ENCODE measurements at regions of chr14 and their contacts with region 1.

Region 1: DNA sequence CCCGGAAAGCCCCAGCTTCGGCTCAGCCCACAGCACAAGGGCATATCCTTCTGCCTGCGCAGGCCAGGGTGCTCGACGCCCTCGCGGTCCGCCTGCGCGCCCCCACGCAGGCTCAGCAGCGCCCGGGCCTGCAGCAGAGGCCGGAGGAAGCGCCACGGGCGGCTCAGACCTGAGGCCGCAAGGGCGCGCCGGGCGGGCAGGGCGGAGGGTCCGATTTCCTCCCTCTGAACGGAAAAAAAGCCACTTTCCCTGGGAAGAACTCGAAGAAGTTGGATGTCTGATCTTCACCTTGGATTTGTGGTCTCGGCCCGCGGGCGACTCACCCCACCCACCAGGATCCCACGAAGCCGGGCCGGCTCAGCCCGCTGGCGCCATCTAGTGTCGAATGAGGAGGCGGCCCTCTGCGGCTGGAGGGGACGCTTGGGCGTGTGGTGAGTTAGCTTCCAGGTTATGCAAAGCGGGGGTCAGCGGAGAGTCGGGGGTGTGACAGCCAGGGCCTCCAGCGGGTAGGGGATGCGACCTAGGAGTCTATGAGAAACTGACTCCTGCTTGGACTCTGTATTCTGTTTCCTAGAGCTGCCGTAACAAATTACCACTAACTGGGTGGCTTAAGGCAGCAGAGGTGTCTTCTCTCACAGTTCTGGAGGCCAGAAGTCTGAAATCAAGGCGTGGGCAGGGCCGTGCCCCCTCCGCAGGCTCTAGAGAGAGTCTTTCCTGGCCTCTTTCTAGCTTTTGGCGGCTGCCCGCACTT is 40.0 kb upstream of the SRSF5 start:
- DNase-seq: peak; percentile 86
- ATAC-seq: peak; percentile 94
- H3K4me3 Mint-ChIP-seq: peak overlapping the region; percentile 65
- H3K27ac Mint-ChIP-seq: peak overlapping the region; percentile 76
- H3K4me1 Mint-ChIP-seq: peaks cover 40% of the 10 kb centered on the region
- H3K27me3 Mint-ChIP-seq: no peaks in the 10 kb centered on the region

Region 2: DNA sequence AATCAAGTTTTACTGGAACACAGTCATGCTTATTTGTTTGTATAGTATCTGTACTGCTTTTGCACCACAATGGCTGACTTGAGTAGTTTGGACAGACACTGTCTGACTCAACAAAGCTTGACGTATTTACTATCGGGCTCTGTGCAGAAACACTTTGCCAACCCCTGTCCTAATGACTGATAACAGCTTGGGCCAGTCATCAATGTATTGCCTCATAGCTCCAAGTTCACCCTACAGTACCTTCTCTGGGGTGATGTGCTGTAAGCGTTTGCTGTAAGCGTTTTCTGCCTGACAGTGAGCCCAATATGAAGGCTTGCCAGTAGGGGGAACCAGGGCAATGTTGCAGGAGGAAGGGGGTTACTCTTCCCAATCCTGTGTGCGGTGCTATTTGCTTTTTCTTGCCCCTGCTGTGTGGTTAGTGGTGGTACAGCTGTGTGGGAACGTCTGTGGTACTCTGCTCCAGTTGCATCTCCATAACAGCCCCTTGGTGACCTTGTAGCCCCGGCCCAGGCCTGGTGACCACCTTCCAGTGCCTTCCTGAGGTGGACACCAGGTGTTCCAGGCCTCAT is 146.8 kb before region 1 on chr14:
- CTCF ChIA-PET with region 1: interaction called, 64 read pairs
- DNase-seq: peak; percentile 56
- ATAC-seq: peak; percentile 66
- H3K4me3 Mint-ChIP-seq: no peak overlapping the region
- H3K27ac Mint-ChIP-seq: no peak overlapping the region
- H3K4me1 Mint-ChIP-seq: peaks cover 6% of the 10 kb centered on the region
- H3K27me3 Mint-ChIP-seq: peaks cover 41% of the 10 kb centered on the region

Region 3: DNA sequence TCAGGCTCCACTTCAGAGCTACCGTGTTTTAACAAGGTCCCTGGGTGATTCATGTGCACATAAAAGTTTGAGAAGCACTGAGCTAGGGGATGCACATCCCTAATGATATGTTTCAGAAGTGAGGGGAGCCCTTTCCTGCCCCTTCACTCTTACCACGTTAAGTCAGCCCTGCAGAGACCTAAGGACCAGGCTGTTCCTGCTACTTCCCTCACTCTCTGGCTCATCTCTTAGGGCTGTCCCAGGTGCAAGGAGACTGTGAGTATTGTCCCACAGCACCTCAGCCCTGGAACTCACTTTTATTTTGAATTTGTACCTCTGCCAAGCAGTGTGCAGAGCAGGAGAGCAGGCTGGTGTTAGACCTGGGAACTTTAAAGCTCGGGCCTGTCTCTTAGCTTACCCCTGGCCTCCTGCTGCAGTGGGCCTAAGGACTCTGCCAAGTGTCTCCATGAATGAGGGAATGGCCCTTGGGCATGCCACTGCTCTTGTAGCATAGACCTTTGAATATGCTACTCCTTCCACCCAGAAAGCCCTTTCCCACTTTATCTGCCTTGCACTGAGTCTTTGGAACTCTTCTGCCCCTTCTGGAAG is 126.5 kb before region 1 on chr14:
- CTCF ChIA-PET with region 1: interaction called, 30 read pairs
- DNase-seq: no peak
- ATAC-seq: no peak
- H3K4me3 Mint-ChIP-seq: no peak overlapping the region
- H3K27ac Mint-ChIP-seq: no peak overlapping the region
- H3K4me1 Mint-ChIP-seq: peaks cover 4% of the 10 kb centered on the region
- H3K27me3 Mint-ChIP-seq: no peaks in the 10 kb centered on the region

Region 4: GRCh38 chr14:69640931-69641330 is 86.0 kb before region 1 on chr14:
- CTCF ChIA-PET with region 1: no interaction called
- DNase-seq: no peak
- ATAC-seq: no peak
- H3K4me3 Mint-ChIP-seq: no peak overlapping the region
- H3K27ac Mint-ChIP-seq: no peak overlapping the region
- H3K4me1 Mint-ChIP-seq: peaks cover 70% of the 10 kb centered on the region
- H3K27me3 Mint-ChIP-seq: no peaks in the 10 kb centered on the region

Region 5: DNA sequence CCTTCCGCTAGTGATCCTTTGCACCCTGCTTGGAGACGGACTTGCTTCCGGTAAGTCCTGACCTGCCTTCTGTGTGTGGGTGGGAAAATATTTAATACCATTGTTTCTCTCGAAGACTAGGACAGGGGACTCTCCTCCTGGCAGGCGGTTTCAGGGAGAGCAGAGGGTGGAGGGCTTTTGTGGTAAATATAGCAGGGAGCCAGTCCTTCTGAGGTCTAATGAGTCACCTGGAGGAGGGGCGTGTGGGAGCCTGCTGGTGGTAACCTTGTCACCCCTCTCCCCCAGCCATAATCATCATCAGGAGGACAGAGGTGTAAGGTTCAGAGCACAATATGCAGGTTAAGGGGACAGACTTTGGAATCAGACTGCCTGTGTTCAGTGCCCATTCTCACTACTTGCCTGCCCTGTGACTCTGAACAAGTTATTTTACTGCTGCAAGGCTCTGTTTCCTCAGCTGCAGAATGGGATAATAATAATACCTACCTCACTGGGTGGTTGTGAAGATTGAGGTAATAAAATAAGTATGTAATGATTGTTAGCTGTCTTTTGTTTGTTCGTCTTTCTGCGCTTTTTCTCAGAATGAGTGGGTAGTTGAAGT is 68.2 kb before region 1 on chr14:
- CTCF ChIA-PET with region 1: interaction called, 16 read pairs
- DNase-seq: peak; percentile 62
- ATAC-seq: peak; percentile 17
- H3K4me3 Mint-ChIP-seq: peak overlapping the region; percentile 10
- H3K27ac Mint-ChIP-seq: peak overlapping the region; percentile 91
- H3K4me1 Mint-ChIP-seq: peaks cover 90% of the 10 kb centered on the region
- H3K27me3 Mint-ChIP-seq: no peaks in the 10 kb centered on the region

Region 6: DNA sequence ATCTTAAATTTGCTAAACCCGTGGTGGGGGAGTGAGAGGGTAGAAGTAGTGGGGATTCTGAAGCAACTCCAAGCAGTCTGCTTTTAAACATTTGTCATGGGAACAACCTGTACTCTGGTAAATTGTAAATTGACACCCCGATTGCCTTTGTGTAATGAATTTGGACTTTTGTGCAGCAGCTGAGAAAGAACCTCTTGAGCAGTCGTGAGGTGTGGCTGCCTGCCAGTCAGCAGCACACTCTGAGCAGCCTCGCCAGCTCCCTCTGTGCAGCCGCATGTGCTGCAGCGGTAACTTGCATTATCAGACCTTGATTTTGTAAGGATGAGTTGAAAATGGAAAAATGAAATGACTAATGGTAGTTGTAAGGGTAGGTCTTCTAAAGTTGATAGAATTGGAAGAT is 41.2 kb before region 1 on chr14:
- CTCF ChIA-PET with region 1: interaction called, 20 read pairs
- DNase-seq: peak; percentile 74
- ATAC-seq: peak; percentile 64
- H3K4me3 Mint-ChIP-seq: peak overlapping the region; percentile 50
- H3K27ac Mint-ChIP-seq: peak overlapping the region; percentile 80
- H3K4me1 Mint-ChIP-seq: peaks cover 87% of the 10 kb centered on the region
- H3K27me3 Mint-ChIP-seq: no peaks in the 10 kb centered on the region

Region 7: DNA sequence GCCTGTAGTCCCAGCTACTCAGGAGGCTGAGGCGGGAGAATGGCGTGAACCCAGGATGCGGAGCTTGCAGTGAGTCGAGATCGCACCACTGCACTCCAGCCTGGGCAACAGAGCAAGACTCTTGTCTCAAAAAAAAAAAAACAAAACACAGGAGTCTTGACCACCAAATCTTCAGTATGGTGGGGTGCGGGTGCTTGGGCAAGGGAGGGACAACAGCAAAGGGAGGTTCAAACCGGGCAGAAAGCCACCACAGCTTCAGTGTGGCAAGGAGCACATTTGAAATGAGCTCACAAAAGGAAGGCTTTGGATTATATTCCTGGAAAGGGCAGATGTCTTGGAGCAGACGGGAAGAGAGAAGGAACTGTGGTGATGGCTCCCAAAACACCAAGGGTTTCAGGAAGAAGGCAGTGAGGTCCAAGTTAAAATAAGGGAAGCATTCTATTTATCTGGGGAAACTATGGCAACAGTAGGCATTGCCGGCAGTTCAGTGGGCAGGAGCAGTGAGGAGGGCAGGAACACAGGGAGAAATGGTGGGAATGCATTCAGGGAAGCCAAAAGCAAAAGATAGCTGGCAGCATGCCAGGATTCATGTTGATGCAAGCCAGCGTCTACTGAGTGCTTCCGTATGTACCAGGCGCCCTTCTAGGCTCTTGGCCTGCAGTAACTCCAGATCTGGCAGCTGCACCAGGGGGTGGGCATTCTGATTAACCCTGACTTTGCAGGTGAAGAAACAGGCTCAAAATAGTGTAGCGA is 11.0 kb before region 1 on chr14:
- CTCF ChIA-PET with region 1: interaction called, 24 read pairs
- DNase-seq: no peak
- ATAC-seq: peak; percentile 40
- H3K4me3 Mint-ChIP-seq: peak overlapping the region; percentile 45
- H3K27ac Mint-ChIP-seq: peak overlapping the region; percentile 89
- H3K4me1 Mint-ChIP-seq: peaks cover 75% of the 10 kb centered on the region
- H3K27me3 Mint-ChIP-seq: no peaks in the 10 kb centered on the region

Region 8: GRCh38 chr14:69838881-69839416 is 112.0 kb after region 1 on chr14:
- CTCF ChIA-PET with region 1: no interaction called
- DNase-seq: no peak
- ATAC-seq: no peak
- H3K4me3 Mint-ChIP-seq: no peak overlapping the region
- H3K27ac Mint-ChIP-seq: no peak overlapping the region
- H3K4me1 Mint-ChIP-seq: no peaks in the 10 kb centered on the region
- H3K27me3 Mint-ChIP-seq: peaks cover 24% of the 10 kb centered on the region